IMR-90 (cell line): ENCODE measurements at regions of chr6 and their contacts with region 1.

Region 1: DNA sequence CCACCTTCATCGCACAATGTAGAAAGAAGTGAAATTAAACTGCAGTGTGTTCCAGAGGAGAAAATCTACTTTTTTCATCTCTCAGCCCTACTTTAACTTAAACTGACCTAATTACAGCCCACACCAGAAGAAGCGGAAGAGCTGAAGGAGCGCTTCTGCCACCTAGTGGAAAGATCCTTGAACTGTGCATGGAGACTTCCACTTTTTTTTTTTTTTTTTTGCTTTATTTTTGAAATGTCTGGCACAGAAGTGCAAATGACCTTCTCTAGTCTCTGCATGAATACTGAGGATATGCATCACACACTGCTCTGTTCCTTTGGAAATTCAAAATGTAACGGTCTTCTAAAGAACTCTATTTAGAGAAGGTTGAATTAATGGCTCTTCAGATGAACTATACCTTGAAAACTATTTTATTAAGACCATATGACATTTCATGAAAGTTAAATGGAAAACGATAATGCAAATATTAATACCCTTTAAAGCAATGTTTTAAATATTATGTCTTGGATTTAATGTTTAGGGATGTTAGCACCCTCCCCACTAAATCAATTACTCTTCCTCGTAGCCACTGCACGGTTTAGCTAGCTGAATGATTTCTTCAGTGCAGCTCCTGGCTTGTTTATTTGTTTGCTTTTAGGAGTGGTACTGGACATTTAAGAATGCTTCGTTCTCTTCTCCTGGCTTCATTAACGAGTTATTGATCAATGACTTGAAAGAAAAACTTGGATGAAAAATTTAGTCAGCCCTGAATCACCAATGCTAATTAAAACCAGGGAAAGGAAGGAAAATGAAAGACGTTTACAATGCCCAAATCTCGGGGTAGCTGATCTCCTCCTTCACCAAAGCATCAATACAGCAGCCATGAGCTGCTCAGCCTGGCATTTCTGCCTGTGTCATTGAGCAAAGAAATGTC is 569.6 kb upstream of the GJE1 start:
- DNase-seq: peak; percentile 91
- ATAC-seq: peak; percentile 91
- H3K4me3 ChIP-seq: no peak overlapping the region
- H3K27ac ChIP-seq: no peak overlapping the region; the same call in 1 of the 2 replicates
- H3K4me1 ChIP-seq: peaks cover 3% of the 10 kb centered on the region
- H3K27me3 ChIP-seq: no peaks in the 10 kb centered on the region
- CTCF ChIP-seq: peak; percentile 92
- POLR2A ChIP-seq: peak; percentile 55; the same call in 1 of the 2 replicates
- RAD21 ChIP-seq: peak; percentile 97

Region 2: GRCh38 chr6:140344142-140344913 is 1218.8 kb before region 1 on chr6:
- CTCF ChIA-PET with region 1: no interaction called
- POLR2A ChIA-PET with region 1: no interaction called
- dilution Hi-C with region 1: no loop called
- in situ Hi-C with region 1: no loop called
- intact Hi-C with region 1: loop called (anchors 5 kb)
- DNase-seq: peak; percentile 67
- ATAC-seq: peak; percentile 79
- H3K4me3 ChIP-seq: no peak overlapping the region
- H3K27ac ChIP-seq: 0 out of 2 replicates have a peak overlapping the region, but pooled peaks have one; percentile 37
- H3K4me1 ChIP-seq: peaks cover 6% of the 10 kb centered on the region
- H3K27me3 ChIP-seq: no peaks in the 10 kb centered on the region
- CTCF ChIP-seq: no peak
- POLR2A ChIP-seq: no peak
- RAD21 ChIP-seq: no peak

Region 3: DNA sequence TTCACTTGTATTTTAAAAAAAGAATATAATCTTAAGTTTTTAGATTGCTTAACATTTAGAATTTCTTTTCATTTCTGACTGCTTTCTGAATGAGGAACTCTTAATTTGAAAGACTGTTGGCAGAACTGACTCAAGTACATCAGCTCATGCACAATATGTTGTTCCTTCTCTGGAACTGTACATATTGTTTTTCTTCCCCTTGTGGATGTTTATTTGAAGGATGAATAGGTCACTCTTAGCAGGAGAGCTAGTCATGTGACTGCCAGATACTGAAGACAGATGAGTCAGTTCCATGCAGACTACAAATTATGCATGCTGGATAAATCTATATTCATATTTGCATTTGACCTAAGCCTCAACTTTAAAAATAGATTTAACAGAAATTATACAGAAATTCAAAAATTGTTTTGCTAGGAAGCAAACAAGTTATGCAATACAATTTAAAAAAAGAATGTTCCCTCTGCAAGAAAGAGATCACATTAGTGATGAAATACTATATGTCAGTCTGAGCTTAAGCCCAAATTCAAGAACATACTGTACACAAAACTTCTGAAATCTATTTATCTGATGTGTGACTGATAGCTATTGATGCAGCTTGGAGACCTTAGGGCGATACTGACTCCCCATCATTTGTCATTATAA is 705.2 kb before region 1 on chr6:
- CTCF ChIA-PET with region 1: no interaction called
- POLR2A ChIA-PET with region 1: no interaction called
- dilution Hi-C with region 1: no loop called
- in situ Hi-C with region 1: no loop called
- intact Hi-C with region 1: loop called (anchors 5 kb)
- DNase-seq: peak; percentile 95
- ATAC-seq: peak; percentile 96
- H3K4me3 ChIP-seq: no peak overlapping the region
- H3K27ac ChIP-seq: peak overlapping the region; percentile 56; the same call in 1 of the 2 replicates
- H3K4me1 ChIP-seq: peaks cover 6% of the 10 kb centered on the region
- H3K27me3 ChIP-seq: no peaks in the 10 kb centered on the region
- CTCF ChIP-seq: no peak
- POLR2A ChIP-seq: no peak
- RAD21 ChIP-seq: peak; percentile 22; the same call in 1 of the 2 replicates

Region 4: DNA sequence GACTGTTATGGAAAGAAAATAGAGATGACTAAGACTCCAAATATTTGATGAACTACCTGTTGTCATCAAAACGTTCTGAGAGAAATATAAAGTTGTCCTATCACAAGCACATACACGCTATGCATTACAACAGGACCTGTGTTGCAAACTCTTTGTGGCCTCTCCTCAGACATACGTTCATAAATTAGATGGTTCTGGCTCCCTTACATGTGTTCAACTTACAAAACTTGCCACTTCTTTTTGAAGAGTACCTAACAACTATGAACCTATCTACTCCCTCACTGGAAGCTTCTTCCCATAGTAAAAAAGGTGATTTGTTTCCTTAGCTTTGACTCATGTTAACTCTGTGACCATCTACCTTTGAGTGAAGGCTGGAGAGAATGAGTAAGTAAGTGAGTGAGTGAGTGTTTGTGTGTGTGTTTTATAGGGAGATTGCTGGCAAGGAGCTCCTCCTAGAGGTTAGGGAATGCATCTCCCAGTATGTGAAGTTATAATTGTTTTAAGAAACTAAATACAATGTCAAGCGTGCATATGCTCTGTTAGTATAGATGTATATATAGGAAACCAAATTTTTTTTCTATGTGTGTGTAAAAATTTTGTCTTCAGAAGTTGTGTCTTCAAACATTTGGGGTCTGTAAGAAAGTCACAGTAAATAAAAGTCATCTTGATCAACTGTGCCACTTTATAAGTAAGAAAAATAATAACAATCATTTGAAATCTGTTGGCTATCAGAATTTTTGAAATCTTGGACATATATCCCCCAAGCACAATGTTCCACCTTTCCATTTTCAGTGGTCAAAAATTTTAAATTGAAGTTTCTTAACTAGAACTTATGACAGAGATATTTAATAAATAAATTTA is 641.5 kb before region 1 on chr6:
- CTCF ChIA-PET with region 1: no interaction called
- POLR2A ChIA-PET with region 1: no interaction called
- dilution Hi-C with region 1: no loop called
- in situ Hi-C with region 1: no loop called
- intact Hi-C with region 1: loop called (anchors 1 kb)
- DNase-seq: peak; percentile 86
- ATAC-seq: peak; percentile 77
- H3K4me3 ChIP-seq: no peak overlapping the region
- H3K27ac ChIP-seq: no peak overlapping the region
- H3K4me1 ChIP-seq: no peaks in the 10 kb centered on the region; the same call in 1 of the 2 replicates
- H3K27me3 ChIP-seq: no peaks in the 10 kb centered on the region
- CTCF ChIP-seq: peak; percentile 87
- POLR2A ChIP-seq: peak; percentile 34; the same call in 1 of the 2 replicates
- RAD21 ChIP-seq: peak; percentile 94

Region 5: DNA sequence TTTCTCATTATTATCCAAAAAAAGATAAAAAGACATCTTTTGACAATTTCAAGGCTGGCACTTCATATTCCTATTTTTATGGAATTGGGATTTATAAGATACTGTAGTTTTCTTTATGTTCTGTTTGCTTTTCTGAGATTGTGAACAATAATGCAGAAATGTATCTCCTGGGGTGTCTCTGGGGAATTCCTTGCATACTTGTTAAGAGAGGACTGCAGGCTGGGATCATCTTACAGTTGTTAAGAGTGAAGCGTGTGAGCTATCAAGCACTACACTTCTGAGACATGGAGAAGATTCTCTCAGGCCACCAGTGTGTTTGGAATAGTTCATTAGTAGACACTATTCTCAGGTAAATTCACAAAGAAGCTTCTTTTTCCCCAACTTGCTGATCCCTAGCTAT is 393.7 kb before region 1 on chr6:
- CTCF ChIA-PET with region 1: no interaction called
- POLR2A ChIA-PET with region 1: no interaction called
- dilution Hi-C with region 1: no loop called
- in situ Hi-C with region 1: no loop called
- intact Hi-C with region 1: loop called (anchors 10 kb)
- DNase-seq: peak; percentile 77
- ATAC-seq: peak; percentile 96
- H3K4me3 ChIP-seq: no peak overlapping the region
- H3K27ac ChIP-seq: no peak overlapping the region
- H3K4me1 ChIP-seq: no peaks in the 10 kb centered on the region
- H3K27me3 ChIP-seq: no peaks in the 10 kb centered on the region
- CTCF ChIP-seq: no peak
- POLR2A ChIP-seq: no peak
- RAD21 ChIP-seq: no peak

Region 6: DNA sequence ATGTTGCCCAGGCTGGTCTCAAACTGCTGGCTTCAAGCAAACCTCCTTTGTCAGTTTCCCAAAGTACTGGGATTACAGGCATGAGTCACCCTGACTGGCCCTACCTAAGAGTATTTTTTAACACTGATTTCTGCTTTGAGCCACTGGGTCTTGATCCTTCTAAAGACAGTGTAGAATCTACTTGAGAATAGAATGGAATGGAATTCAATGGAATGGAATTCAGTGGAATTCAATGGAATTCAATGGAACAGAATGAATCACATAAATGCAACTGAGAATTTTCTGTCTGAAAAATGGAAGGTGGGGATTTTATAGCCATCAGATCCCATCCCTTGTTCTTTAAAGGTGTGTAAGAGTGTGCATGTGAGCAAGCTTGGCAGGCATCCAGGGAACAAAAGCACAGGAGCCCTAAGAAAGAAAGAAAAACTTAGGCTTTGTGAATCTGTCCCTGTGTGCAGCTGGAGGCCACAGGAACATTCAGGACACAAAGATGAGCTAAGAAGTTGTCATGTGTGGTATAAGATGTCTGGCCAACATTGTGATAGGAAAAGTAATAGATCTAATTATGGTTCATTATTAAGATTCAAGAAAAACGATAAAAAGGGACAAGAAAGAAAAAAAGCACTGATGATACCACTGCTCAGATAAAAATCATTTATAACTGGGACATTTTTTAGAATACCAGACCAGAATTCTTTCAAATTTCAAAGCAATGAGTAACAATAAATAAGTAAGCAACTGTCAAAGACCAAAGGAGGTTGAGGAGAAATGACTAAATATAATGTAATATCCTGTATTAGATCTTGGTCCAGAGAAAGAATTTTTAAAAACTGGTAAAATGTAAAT is 111.4 kb before region 1 on chr6:
- CTCF ChIA-PET with region 1: no interaction called
- POLR2A ChIA-PET with region 1: no interaction called
- dilution Hi-C with region 1: no loop called
- in situ Hi-C with region 1: no loop called
- intact Hi-C with region 1: loop called (anchors 5 kb)
- DNase-seq: peak; percentile 83
- ATAC-seq: peak; percentile 86
- H3K4me3 ChIP-seq: no peak overlapping the region
- H3K27ac ChIP-seq: peak overlapping the region; percentile 97
- H3K4me1 ChIP-seq: peaks cover 10% of the 10 kb centered on the region
- H3K27me3 ChIP-seq: no peaks in the 10 kb centered on the region
- CTCF ChIP-seq: no peak
- POLR2A ChIP-seq: no peak
- RAD21 ChIP-seq: no peak

Region 7: DNA sequence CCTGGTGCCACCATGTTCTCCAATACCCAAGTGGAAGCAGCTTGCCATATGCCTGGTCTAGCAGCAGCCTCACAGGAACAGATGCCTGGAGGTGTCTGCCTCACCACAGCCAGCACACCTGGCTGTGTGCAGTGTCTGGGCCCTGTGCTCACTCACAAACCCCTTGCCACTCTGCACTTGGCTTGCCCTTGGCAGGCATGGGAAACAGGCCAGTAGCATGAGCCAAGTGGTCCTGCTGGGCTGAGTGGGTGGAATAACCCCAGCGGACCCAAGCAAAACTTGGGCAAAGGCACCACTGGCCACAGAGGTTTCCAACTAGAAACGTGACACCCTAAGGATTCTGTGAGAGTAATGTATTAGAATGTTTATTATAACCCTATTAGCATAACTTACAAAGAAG is 30.9 kb before region 1 on chr6:
- CTCF ChIA-PET with region 1: no interaction called
- POLR2A ChIA-PET with region 1: no interaction called
- dilution Hi-C with region 1: no loop called
- in situ Hi-C with region 1: no loop called
- intact Hi-C with region 1: no loop called
- DNase-seq: no peak
- ATAC-seq: no peak
- H3K4me3 ChIP-seq: no peak overlapping the region
- H3K27ac ChIP-seq: no peak overlapping the region
- H3K4me1 ChIP-seq: no peaks in the 10 kb centered on the region
- H3K27me3 ChIP-seq: no peaks in the 10 kb centered on the region
- CTCF ChIP-seq: no peak
- POLR2A ChIP-seq: no peak
- RAD21 ChIP-seq: no peak

Region 8: DNA sequence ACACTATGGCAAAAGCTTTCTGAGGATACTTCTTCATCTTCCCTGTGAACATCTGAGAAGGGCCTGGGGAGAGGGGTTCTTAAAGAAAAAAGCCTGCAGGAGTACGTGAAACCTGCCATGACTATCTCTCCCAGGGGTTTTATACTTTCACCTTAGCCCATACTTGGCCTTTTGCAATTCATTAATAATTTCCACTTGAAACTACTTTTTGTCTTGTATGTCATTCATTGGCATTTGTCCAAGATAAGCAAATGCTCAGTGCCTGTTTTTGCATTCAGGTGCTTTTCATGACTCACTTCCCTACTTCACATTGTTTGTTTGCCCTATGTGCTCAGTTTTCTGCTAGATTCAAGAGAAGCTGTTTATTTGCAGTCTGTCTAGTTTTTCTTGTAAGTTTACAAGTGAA is 10.6 kb before region 1 on chr6:
- CTCF ChIA-PET with region 1: no interaction called
- POLR2A ChIA-PET with region 1: no interaction called
- dilution Hi-C with region 1: no loop called
- in situ Hi-C with region 1: no loop called
- intact Hi-C with region 1: no loop called
- DNase-seq: peak; percentile 86
- ATAC-seq: no peak
- H3K4me3 ChIP-seq: no peak overlapping the region
- H3K27ac ChIP-seq: no peak overlapping the region
- H3K4me1 ChIP-seq: no peaks in the 10 kb centered on the region; the same call in 1 of the 2 replicates
- H3K27me3 ChIP-seq: no peaks in the 10 kb centered on the region
- CTCF ChIP-seq: no peak
- POLR2A ChIP-seq: no peak
- RAD21 ChIP-seq: no peak